SK-N-SH (cell line): ENCODE measurements at regions of chr17 and their contacts with region 1.

Region 1: DNA sequence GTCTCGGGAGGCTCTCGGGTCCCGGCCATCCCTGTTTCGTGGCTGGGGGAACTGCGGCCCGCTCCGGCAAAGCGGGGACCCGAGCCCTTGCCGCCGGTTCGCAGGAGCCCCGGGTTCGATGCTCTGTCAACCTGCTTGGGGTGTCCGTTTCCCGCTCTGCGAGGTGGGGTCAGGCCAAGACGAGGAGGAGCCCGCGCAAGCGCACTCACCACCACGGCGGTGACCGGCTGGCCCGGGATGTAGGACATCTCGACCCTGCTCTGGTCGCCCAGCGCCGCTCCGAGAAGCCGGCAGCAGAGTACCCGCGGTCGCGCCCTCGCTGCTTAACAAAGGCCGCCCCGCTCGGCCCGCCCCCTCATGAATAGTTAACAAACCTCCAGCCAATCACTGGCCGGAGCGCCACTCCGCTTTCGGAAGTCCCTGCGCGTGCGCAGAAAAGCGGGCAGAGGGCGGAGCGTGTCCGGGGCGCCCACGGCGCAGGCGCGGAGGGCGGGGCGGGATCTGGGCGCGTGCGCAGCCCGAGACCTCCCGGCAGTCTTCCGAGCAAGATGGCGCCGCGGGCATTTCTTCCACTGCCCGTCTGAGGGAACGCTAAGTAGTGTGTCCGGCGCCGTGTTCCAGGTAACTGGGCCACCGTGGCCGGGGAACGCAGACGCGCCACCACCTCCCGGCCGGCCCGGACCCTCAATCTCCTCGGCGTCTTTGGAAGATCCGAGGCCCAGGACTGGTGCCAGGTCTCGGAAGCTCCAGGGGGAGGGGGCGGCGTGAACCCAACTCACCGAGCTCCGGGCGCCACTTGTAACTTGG is at the starts of genes EMC6 and TAX1BP3:
- DNase-seq: peak; percentile 99
- H3K4me3 ChIP-seq: peak within 1 kb of the TSS; percentile 91 to 96
- H3K27ac ChIP-seq: peak within 1 kb of the TSS; percentile 98
- H3K4me1 ChIP-seq: peaks cover 0 to 20% of the 10 kb centered on the region in 2 experiments; a peak in 1 of 4 replicates
- H3K27me3 ChIP-seq: no peaks in the 10 kb centered on the region
- CTCF ChIP-seq: no peak
- EP300 ChIP-seq: no peak
- RAD21 ChIP-seq: no peak
- polyA plus RNA-seq, gene EMC6: 56.6 and 64.4 TPM in 2 replicates
- polyA plus RNA-seq, gene TAX1BP3: 165 and 192 TPM in 2 replicates

Region 2: DNA sequence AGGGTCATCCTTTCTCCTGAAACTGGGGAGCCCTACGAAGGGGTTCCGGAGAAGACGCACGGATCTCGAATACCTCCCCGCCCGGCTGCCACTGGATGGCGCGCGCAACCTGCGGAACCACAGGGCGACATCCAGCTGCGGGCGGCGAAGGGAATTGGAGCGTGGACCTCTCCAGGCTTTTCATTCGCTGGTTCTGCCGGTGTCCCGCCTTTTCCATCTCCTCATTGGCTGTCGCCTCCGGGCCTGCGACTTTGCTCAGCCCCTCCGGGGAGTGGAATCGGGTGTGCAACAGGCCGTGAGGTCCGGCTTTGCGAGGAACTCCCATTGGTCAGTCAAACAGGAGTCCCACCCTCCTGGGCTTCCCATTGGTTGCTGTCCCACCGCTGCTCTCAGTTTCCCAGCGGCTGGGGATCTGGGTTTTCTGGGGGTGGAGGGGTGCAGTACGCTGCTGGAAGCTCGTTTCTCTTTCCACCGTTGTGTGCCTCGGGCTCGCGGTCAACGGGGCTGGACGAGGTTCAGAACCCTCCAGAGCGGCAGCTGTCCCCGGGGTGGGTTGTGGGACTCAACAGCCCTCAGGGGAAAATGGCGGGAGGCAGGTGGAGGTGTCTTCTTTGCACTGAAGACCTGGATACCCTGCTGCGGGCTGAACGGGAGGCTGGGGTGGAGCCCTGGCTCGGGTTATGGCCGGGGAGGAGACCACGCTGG is 619.6 kb before region 1 on chr17:
- CTCF ChIA-PET with region 1: interaction called, 10 read pairs
- POLR2A ChIA-PET with region 1: interaction called, 3 read pairs
- DNase-seq: peak; percentile 92
- H3K4me3 ChIP-seq: peak overlapping the region; percentile 92 to 97
- H3K27ac ChIP-seq: peak overlapping the region in 1 of 2 experiments; percentile 83; a peak in 2 of 4 replicates
- H3K4me1 ChIP-seq: peaks cover 0 to 5% of the 10 kb centered on the region in 2 experiments; a peak in 1 of 4 replicates
- H3K27me3 ChIP-seq: no peaks in the 10 kb centered on the region
- CTCF ChIP-seq: peak; percentile 72
- EP300 ChIP-seq: no peak
- RAD21 ChIP-seq: peak; percentile 85

Region 3: GRCh38 chr17:3535253-3535995 is 133.1 kb before region 1 on chr17:
- CTCF ChIA-PET with region 1: no interaction called
- POLR2A ChIA-PET with region 1: no interaction called
- DNase-seq: peak; percentile 88
- H3K4me3 ChIP-seq: peak overlapping the region; percentile 27 to 53
- H3K27ac ChIP-seq: no peak overlapping the region
- H3K4me1 ChIP-seq: no peaks in the 10 kb centered on the region; a peak in 1 of 4 replicates
- H3K27me3 ChIP-seq: no peaks in the 10 kb centered on the region
- CTCF ChIP-seq: peak; percentile 65
- EP300 ChIP-seq: no peak
- RAD21 ChIP-seq: peak; percentile 52

Region 4: DNA sequence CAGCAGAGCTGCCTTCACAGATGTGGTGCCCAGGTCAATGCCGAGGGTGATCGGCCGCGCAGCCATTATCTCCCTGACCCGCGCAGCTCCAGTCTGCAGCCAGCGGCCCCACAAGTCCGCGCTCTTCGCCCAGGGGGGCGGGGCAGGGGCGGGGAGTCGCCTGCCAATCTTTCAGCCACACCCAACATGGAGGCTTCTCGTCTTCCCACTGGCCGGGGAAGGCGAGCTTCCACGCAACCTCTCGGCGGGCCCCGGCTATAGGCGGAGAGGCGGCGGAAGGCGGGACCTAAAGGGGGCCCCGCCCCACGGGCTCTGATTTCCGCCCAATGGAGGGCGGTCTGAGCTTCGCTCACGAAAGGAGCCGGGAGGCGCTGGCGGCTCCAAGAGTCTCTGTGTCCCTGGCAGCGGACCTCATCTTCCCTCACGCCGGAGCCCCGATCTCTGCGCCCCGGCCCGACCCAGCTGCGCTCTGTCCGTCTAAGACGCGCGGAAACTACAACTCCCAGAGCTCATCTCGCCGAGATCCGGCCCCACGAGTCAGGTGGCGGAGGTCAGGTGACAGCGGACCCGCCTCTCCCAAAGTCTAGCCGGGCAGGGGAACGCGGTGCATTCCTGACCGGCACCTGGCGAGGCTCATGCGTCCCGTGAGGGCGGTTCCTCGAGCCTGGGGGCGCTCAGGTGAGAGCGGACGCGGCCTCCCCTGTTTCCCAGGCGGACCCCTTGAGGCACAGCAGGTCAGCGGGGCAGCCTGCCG is 32.2 kb before region 1 on chr17 and contains the starts of genes CTNS and SHPK:
- CTCF ChIA-PET with region 1: no interaction called
- POLR2A ChIA-PET with region 1: interaction called, 10 read pairs
- DNase-seq: peak; percentile 99
- H3K4me3 ChIP-seq: peak within 1 kb of the TSS; percentile 83 to 94
- H3K27ac ChIP-seq: peak within 1 kb of the TSS; percentile 97 to 98
- H3K4me1 ChIP-seq: peaks cover 0 to 4% of the 10 kb centered on the region in 2 experiments; a peak in 1 of 4 replicates
- H3K27me3 ChIP-seq: no peaks in the 10 kb centered on the region
- CTCF ChIP-seq: no peak
- EP300 ChIP-seq: no peak
- RAD21 ChIP-seq: no peak
- polyA plus RNA-seq, gene CTNS: 6.7 and 8.2 TPM in 2 replicates
- polyA plus RNA-seq, gene SHPK: 9.0 and 9.7 TPM in 2 replicates

Region 5: DNA sequence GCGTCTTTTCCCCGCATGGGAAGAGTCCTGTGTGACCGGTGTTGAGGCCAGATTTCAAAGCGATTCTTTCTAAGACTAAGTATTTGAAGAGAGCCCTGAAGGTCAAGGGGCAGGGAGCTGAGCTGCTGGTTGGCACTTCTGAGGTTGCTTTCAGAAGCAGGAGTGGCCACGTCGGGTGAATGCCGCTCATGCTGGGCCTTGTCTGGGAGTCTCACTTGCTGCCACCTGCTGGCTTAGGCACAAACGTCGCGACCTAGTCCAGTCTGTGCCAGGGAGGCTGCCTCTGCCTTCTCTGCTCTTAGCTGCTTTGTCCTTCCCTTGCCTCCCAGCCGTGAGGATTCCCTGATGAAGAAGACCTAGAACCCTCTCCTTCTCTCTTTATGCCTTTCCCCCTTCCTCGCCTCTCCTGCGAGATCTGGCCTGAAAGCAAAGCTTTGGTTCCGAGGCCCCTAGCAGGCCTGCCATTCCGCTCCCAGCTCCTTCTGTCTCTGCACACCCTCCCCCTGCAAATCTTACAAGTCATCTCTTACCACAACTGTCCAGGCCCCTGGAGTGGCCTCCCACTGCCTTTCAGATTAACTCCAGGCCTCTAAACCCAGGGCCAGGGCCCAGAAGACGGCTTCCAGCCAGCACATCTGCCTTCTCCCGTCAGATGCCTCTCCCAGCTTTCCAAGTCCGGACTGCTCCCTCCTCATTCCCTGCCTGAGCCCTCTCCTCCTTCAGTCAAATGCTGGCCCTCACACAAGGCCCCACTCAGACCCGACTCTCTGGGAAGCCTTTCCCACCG is 20.5 kb before region 1 on chr17:
- CTCF ChIA-PET with region 1: interaction called, 14 read pairs
- POLR2A ChIA-PET with region 1: no interaction called
- DNase-seq: peak; percentile 71
- H3K4me3 ChIP-seq: no peak overlapping the region
- H3K27ac ChIP-seq: no peak overlapping the region
- H3K4me1 ChIP-seq: no peaks in the 10 kb centered on the region
- H3K27me3 ChIP-seq: no peaks in the 10 kb centered on the region
- CTCF ChIP-seq: peak; percentile 61
- EP300 ChIP-seq: no peak
- RAD21 ChIP-seq: peak; percentile 58

Region 6: DNA sequence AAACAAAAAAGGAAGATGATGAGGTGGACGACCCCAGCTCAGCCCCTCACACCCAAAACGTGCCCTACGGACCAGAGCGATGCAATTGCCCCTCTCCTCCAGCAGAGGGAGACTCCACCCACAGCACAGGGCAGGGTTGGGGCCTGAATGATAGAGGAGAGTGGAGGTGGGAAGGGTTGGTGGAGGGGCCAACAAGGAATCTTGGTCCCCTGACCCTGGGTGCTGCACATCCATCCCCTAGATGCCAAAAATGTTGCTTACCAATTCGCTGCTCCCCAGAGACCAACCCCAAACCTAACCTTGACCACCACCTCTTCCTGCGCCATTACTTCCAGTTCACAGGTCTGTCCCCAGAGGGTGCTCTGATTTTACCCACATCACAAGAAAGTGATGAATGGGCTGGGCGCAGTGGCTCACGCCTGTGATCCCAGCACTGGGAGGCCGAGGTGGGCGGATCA is 14.6 kb after region 1 on chr17:
- CTCF ChIA-PET with region 1: interaction called, 14 read pairs
- POLR2A ChIA-PET with region 1: no interaction called
- DNase-seq: peak; percentile 90
- H3K4me3 ChIP-seq: peak overlapping the region in 1 of 2 experiments; percentile 19; a peak in 1 of 4 replicates
- H3K27ac ChIP-seq: no peak overlapping the region
- H3K4me1 ChIP-seq: no peaks in the 10 kb centered on the region
- H3K27me3 ChIP-seq: no peaks in the 10 kb centered on the region
- CTCF ChIP-seq: peak; percentile 90
- EP300 ChIP-seq: no peak
- RAD21 ChIP-seq: peak; percentile 62